HepG2 (cell line): ENCODE measurements at regions of chr18 and their contacts with region 1.

Region 1: DNA sequence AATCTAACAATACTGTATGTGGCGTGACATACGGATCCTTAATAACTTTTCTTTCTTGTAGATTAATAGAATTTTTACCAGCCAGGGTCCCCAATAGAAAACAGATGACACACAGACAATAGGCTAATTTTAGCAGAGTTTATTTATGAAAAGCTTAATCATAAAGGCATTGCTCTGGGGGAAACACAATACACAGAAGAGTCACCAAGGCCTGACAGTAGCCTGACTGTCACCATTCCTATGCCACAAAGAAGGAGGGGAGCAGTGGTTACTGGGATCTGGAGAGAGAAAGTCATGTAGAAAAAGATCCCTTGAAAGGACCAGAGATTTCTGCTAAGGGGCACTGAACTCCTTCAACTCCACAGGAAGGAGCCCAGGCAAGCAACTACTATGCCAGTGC is 139.5 kb downstream of the METTL4 start:
- DNase-seq: no peak
- ATAC-seq: no peak
- H3K4me3 ChIP-seq: no peak overlapping the region
- H3K27ac ChIP-seq: no peak overlapping the region
- H3K4me1 ChIP-seq: no peaks in the 10 kb centered on the region
- H3K27me3 ChIP-seq: no peaks in the 10 kb centered on the region; a peak in 1 of 5 replicates
- CTCF ChIP-seq: no peak
- EP300 ChIP-seq: no peak
- POLR2A ChIP-seq: no peak
- RAD21 ChIP-seq: no peak

Region 2: GRCh38 chr18:2451556-2451955 is 19.8 kb after region 1 on chr18:
- CTCF ChIA-PET with region 1: no interaction called
- POLR2A ChIA-PET with region 1: no interaction called
- in situ Hi-C with region 1: no loop called
- intact Hi-C with region 1: loop called (anchors 1 kb)
- DNase-seq: no peak
- ATAC-seq: no peak
- H3K4me3 ChIP-seq: no peak overlapping the region
- H3K27ac ChIP-seq: no peak overlapping the region
- H3K4me1 ChIP-seq: no peaks in the 10 kb centered on the region
- H3K27me3 ChIP-seq: no peaks in the 10 kb centered on the region
- CTCF ChIP-seq: no peak
- EP300 ChIP-seq: no peak
- POLR2A ChIP-seq: no peak
- RAD21 ChIP-seq: no peak